ENCODE measurements at regions of chr3 and their contacts with region 1.

Region 1: DNA sequence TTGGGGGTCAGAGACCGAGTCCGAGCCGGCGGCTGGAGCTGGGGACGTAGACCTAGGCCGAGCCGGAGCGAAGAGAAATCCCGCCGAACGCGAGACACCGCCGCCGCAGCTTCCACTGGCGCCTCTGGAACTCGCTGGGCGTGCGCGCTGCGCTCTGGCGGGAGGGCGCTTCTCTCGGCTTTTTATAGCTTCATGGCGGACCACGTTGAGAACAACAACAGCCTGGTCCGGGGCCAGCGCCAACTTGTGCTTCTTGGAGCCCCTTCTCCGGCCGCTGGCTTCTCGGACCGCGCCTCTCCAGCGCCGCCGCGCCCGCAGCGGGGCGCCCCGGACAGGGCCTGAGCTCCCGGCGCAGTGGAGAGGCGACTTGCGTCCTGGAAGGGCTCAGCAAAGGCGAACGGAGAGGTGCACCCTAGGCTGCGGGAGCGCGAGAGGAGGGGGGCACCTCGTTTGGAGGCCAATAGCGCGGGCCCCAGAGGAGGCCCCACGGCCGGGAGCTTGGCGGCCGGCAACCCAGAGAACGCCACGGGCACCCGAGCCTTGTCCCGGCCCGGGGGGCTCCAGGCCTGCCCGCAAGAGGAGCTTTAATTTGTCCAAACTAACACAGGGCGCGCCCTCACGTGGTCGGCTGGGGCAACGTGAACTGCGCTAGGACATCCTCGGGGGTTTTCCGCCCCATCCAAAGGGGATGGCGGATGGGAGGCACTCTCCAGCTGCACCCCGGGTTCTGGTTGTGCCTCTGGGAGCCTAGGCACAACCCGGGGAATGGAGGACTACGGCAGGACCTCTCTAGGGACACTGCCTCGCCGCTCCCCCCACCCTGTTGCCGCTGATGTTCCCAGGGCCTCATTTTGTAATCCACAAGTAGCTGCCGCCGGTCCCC is 37.7 kb downstream of the HMCES start:
- DNase-seq: peak; percentile 83 to 94 (median 94)
- ATAC-seq: peak; percentile 52 to 60
- H3K4me3 ChIP-seq: peak overlapping the region; percentile 84
- H3K27ac ChIP-seq: peak overlapping the region; percentile 92
- H3K4me1 ChIP-seq: no peaks in the 10 kb centered on the region
- H3K27me3 ChIP-seq: no peaks in the 10 kb centered on the region

Region 2: DNA sequence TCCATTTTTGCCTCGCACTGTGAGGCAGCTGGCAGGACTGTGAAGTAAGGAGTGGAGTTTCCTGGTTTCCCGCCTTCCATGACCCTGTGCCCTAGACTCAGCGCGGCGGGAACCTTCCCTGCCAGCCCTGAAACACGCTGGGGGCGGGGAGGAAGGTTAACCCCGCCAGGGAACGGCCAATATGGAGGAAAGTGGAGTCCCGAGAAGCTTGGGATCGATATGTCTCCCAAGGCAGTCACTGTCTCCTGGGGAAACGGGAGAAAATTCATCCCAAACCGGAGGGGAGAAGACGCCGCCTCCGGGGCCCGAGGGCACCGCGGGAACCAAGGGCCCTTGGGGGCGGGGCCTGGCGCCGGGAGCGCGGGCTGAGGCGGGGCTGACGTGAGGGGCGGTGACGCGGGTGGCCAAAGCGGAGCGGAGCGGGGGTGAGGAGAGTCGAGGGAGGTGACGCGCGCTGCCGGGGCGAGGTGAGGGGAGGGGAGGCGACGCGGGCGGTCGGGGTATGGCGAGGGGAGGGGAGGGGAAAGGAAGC is 37.9 kb before region 1 on chr3 and contains the start of gene HMCES:
- intact Hi-C with region 1: loop called in 1 of 4 experiments (anchors 5 kb)
- DNase-seq: peak; percentile 95 to 98 (median 97)
- ATAC-seq: peak; percentile 97
- H3K4me3 ChIP-seq: peak within 1 kb of the TSS; percentile 75
- H3K27ac ChIP-seq: peak within 1 kb of the TSS; percentile 87
- H3K4me1 ChIP-seq: peaks cover 3% of the 10 kb centered on the region
- H3K27me3 ChIP-seq: no peaks in the 10 kb centered on the region
- total RNA-seq, gene HMCES: 38.0 to 53.2 (median 42.3) TPM